ENCODE measurements at regions of chr2 and their contacts with region 1.

Region 1: GRCh38 chr2:208040199-208041171 is 15.2 kb upstream of the PLEKHM3 start:
- DNase-seq: peak; percentile 65

Region 2: DNA sequence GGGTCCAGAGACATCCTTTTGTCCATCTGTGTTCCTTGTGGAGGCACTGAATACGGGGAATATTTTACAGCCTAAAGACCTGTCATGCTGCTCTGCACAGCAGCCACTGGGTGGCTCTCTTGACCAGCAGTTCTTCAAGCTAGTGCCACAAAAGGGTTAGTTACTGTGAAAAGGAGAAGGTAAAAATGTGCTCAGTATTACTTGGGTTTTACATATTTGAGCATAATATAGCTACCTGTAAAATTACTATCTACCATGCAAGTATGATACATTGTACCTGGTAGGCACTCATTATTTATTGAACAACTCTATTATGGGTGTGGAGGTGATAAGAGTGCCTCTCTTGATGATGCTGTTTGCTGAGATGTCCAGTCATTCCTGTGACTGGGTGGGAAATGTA is 294.4 kb before region 1 on chr2:
- CTCF ChIA-PET with region 1: interaction called, 14 read pairs
- POLR2A ChIA-PET with region 1: interaction called, 3 read pairs
- DNase-seq: peak; percentile 74

Measured in HEK293T (cell line).